Left colon (tissue), 2 donors: ENCODE measurements at regions of chr16 and their contacts with region 1.

Region 1: GRCh38 chr16:17467923-17468540 is 2.7 kb downstream of the XYLT1 start:
- DNase-seq: peak; percentile 79 to 84
- ATAC-seq: peak; percentile 72

Region 2: GRCh38 chr16:17196526-17196925 is 271.5 kb before region 1 on chr16:
- intact Hi-C with region 1: loop called in 1 of 2 experiments (anchors 5 kb)
- DNase-seq: no peak
- ATAC-seq: no peak

Region 3: GRCh38 chr16:17301593-17302135 is 166.4 kb before region 1 on chr16:
- intact Hi-C with region 1: loop called in 1 of 2 experiments (anchors 10 kb)
- DNase-seq: peak; percentile 38 to 46
- ATAC-seq: peak; percentile 43

Region 4: DNA sequence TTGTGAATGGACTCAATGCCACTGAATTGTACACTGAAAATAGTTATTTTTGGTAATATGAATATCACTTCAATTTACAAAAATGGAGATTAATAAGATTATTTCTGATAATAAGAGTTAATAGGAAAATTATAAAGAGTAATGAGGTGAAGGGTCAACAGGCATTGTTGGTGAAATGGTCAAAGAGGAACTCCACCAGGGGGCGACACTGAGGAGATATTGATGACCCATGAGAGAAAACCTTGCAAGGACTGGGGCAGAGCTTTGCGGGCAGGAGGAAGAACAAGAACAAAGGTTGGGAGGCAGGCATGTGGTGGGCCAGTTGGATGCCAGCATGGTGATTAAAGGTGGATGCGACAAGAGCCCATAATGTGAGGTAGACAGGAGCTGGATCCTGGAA is 76.8 kb after region 1 on chr16:
- intact Hi-C with region 1: no loop called
- DNase-seq: peak in 1 of 2 donors; percentile 12
- ATAC-seq: no peak